ENCODE measurements at regions of chr5 and their contacts with region 1.

Region 1: GRCh38 chr5:128201065-128201926 is 117.7 kb downstream of the SLC12A2 start:
- DNase-seq: peak; percentile 74 to 97 (median 87)
- ATAC-seq: peak; percentile 94 to 98 (median 98)
- H3K4me3 ChIP-seq: peak overlapping the region in 2 of 4 donors; percentile 10 to 16
- H3K27ac ChIP-seq: no peak overlapping the region
- H3K4me1 ChIP-seq: peaks cover 0 to 14% (median 5%) of the 10 kb centered on the region in 3 donors
- H3K27me3 ChIP-seq: no peaks in the 10 kb centered on the region
- CTCF ChIP-seq: peak; percentile 73 to 88 (median 84)

Region 2: GRCh38 chr5:127564002-127564769 is 637.1 kb before region 1 on chr5:
- intact Hi-C with region 1: loop called in 2 of 3 experiments (anchors 5 to 10 kb)
- DNase-seq: peak in 3 of 6 donors; percentile 21 to 52 (median 39)
- ATAC-seq: peak; percentile 68 to 94 (median 90)
- H3K4me3 ChIP-seq: no peak overlapping the region
- H3K27ac ChIP-seq: no peak overlapping the region
- H3K4me1 ChIP-seq: peaks cover 0 to 4% (median 0%) of the 10 kb centered on the region in 3 donors
- H3K27me3 ChIP-seq: no peaks in the 10 kb centered on the region
- CTCF ChIP-seq: peak in 3 of 4 donors; percentile 46 to 50 (median 47)

Region 3: DNA sequence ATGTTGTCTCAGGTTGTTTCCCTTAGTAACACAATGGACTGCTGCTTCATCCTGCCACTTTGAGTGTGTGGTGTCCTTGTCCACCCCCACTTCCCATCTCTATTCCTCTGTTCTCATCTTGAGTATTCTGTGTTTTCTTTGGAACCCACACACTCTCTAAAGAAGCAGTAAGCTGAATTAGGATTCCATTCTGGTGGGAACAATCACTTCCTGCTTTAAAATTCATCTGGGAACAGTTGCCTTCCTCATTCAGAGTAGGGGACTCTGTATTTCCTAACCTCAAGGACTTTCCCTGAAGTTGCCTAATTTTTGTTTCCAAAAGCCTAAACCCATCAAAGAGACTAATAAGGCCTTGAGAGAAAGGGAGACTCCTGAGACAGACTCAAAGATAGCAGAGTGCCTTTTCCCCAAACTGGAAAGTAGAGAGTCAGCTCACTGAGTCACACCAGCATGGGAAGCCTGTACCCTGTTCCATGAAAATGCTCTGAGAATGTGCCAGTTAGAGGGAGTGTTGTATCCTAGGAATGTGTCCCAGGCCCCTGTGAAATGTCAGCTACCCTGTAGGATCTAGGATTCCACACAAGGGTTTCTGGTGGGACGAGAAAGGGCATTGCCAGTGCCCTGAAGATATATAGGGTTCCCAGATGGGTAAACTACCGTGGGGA is 434.5 kb before region 1 on chr5:
- intact Hi-C with region 1: loop called in 1 of 3 experiments (anchors 10 kb)
- DNase-seq: no peak
- ATAC-seq: no peak
- H3K4me3 ChIP-seq: no peak overlapping the region
- H3K27ac ChIP-seq: no peak overlapping the region
- H3K4me1 ChIP-seq: no peaks in the 10 kb centered on the region
- H3K27me3 ChIP-seq: no peaks in the 10 kb centered on the region
- CTCF ChIP-seq: no peak

Region 4: DNA sequence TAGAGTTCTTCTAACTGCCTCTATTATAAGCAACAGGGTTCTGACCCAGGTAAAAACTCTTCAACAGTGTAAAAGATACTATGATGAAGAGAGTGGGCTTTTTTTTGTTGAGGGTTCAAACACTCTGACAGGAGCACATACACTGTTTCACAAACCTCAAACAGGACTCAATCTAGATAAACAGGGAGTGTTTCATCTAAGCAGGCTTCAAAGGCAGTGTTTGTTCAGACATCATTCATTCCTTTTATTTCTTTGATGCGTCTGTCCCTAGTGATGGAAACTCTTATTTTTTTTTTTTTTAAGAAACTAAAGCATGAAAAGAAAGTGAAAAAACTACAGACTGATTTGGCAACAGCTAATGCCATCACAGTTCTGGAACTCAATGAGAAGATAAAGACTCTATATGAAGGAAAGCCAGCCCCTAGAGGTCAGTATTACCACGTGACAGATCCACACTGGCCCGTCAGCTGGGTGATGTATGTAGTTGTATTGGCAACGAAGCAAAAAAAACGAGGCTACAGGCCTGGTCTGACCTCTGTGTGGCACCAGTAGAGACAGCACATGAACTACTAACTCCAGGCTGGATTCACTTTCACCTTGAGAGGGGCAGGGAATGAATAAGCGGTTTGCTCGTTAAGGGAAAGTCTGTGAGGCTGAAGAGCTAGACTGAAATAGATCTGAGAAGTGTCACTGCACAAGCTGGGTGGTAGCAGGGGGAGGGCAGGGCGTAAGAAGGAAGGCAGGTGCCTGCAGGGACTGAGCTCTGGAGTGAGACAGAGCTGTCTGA is 325.9 kb before region 1 on chr5:
- intact Hi-C with region 1: loop called in 1 of 3 experiments (anchors 10 kb)
- DNase-seq: peak in 4 of 6 donors; percentile 19 to 51 (median 34)
- ATAC-seq: peak; percentile 80 to 91 (median 89)
- H3K4me3 ChIP-seq: no peak overlapping the region
- H3K27ac ChIP-seq: peak overlapping the region in 2 of 4 donors; percentile 40 to 44
- H3K4me1 ChIP-seq: no peaks in the 10 kb centered on the region
- H3K27me3 ChIP-seq: no peaks in the 10 kb centered on the region
- CTCF ChIP-seq: no peak

Region 5: DNA sequence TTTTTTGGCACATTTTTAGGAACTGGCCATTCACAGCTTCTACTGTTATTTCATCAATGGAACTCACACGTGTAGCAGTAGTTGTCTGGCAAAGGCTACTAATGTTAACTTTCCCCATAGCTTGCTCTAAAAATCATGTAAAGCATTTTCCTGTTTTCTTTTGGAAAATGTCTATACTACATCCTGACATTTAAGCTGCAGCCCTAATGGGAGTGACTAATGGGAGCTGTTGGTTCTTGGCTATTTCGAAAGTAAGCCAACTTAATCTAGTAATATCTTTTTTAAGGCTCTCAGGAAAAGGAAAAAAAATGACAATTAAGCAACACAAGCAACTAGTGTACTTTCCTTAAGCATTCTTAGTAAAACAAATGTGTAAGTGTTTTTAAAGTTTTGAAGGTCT is 51.5 kb after region 1 on chr5:
- intact Hi-C with region 1: no loop called
- DNase-seq: no peak
- ATAC-seq: peak in 1 of 4 donors; percentile 32
- H3K4me3 ChIP-seq: no peak overlapping the region
- H3K27ac ChIP-seq: no peak overlapping the region
- H3K4me1 ChIP-seq: no peaks in the 10 kb centered on the region
- H3K27me3 ChIP-seq: no peaks in the 10 kb centered on the region
- CTCF ChIP-seq: no peak

Region 6: DNA sequence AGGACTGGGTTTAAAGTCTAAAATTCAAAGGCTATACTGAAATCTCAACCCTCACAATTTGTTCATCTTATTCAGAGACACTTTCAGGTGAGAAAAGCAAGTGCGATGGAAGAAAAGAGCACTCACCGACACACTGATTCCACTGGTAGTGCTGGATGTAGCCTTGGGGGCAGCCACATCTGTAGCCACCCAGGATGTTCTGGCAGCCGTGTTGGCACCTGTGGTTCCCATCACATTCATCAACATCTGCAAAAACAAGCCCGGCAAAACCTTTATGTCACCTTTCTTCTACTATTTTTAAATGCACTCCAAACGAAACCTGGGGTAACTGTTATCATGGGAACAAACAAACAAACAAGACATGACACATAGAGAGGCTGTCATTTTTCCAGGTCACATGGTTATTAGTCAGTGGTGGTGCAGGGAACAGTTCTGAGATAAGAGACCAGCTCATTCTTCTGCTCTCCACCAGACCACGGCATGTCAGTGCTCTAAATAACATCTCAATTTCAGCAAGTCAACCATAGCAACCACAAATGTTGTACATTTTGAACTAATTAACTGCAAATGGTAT is 70.7 kb after region 1 on chr5:
- intact Hi-C with region 1: no loop called
- DNase-seq: no peak
- ATAC-seq: no peak
- H3K4me3 ChIP-seq: no peak overlapping the region
- H3K27ac ChIP-seq: no peak overlapping the region
- H3K4me1 ChIP-seq: no peaks in the 10 kb centered on the region
- H3K27me3 ChIP-seq: peaks cover 0 to 3% (median 0%) of the 10 kb centered on the region in 4 donors
- CTCF ChIP-seq: no peak

Measured in pancreas (tissue), 10 donors.